A549 (cell line): ENCODE measurements at regions of chr20 and their contacts with region 1.

Region 1: GRCh38 chr20:44609511-44610312 is 27.3 kb downstream of the PKIG start:
- DNase-seq: peak; percentile 91 to 95
- ATAC-seq: peak; percentile 98 to 99
- H3K4me3 ChIP-seq: peak overlapping the region; percentile 29; the same call in 1 of the 3 replicates
- H3K27ac ChIP-seq: peak overlapping the region; percentile 76 to 85
- H3K4me1 ChIP-seq: peaks cover 11% of the 10 kb centered on the region
- CTCF ChIP-seq: peak; percentile 89
- EP300 ChIP-seq: no peak
- POLR2A ChIP-seq: peak; percentile 39; the same call in 1 of the 2 replicates
- RAD21 ChIP-seq: peak; percentile 96 to 98

Region 2: DNA sequence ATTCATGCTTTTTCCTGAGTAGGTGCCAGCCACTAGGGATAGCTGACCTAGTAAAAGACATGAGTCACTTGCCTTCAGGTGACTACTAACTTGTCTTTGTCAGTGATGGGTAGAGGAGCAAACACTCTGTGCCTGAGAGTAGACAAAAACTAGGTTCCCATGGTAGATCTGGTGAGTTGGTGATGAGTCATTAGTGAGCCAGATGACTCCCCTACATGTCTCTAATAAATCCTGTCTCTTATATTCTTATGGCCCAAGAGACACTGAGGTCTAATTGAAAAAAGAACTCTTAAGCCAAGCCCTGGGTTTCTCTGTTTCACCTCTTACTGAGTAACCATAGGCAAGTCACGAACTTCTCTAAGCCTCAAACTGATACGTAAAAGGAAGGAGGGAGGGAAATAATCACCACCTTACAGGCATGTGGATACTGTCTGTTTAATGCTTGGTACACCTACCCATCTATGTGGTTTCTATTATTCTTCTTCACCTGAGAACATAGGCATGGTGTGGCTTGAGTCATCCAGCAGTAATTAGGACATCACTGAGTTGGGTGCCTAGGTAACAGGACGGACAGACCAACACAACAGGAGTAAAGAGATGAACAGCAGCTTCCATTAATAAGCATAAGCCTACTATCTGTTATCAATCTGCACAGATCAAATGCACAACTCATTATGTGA is 113.8 kb before region 1 on chr20:
- CTCF ChIA-PET with region 1: interaction called, 10 read pairs
- POLR2A ChIA-PET with region 1: no interaction called
- DNase-seq: peak; percentile 70 to 89
- ATAC-seq: peak; percentile 81 to 88
- H3K4me3 ChIP-seq: peak overlapping the region; percentile 15; the same call in 1 of the 3 replicates
- H3K27ac ChIP-seq: peak overlapping the region; percentile 86 to 90
- H3K4me1 ChIP-seq: peaks cover 47% of the 10 kb centered on the region
- CTCF ChIP-seq: no peak
- EP300 ChIP-seq: peak; percentile 7 to 36; a peak in 1 of 5 replicates
- POLR2A ChIP-seq: no peak
- RAD21 ChIP-seq: no peak

Region 3: GRCh38 chr20:44532259-44532980 is 77.3 kb before region 1 on chr20:
- CTCF ChIA-PET with region 1: interaction called, 35 read pairs
- POLR2A ChIA-PET with region 1: no interaction called
- DNase-seq: no peak
- ATAC-seq: no peak
- H3K4me3 ChIP-seq: peak overlapping the region; percentile 68
- H3K27ac ChIP-seq: peak overlapping the region; percentile 82 to 91
- H3K4me1 ChIP-seq: peaks cover 19% of the 10 kb centered on the region; the same call in 2 of the 3 replicates
- CTCF ChIP-seq: no peak
- EP300 ChIP-seq: no peak
- POLR2A ChIP-seq: no peak
- RAD21 ChIP-seq: no peak

Region 4: DNA sequence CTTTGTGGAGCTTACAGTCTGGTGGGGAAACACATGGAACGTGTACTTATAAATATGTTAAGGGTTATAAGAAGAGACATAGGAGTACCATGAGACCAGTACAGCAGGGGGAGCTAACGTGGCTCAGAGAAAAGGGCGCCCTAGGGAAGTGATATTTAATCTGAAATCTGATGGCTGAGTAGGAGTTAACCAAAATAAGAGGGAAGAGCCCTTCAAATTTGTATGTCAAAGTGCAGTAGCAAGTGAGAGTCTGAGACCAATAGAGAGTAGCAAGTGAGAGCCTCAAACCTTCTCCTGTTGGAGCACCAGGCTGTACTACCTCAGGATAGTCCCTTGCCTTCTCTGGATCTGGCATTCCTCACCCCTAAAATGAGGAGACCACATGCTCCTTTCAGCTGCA is 33.4 kb before region 1 on chr20:
- CTCF ChIA-PET with region 1: interaction called, 13 read pairs
- POLR2A ChIA-PET with region 1: no interaction called
- DNase-seq: peak in 1 of 2 experiments; percentile 51
- ATAC-seq: peak; percentile 52 to 72; a peak in 3 of 6 replicates
- H3K4me3 ChIP-seq: no peak overlapping the region
- H3K27ac ChIP-seq: peak overlapping the region; percentile 11 to 47; a peak in 3 of 6 replicates
- H3K4me1 ChIP-seq: peaks cover 28% of the 10 kb centered on the region
- CTCF ChIP-seq: peak; percentile 13; the same call in 1 of the 3 replicates
- EP300 ChIP-seq: no peak
- POLR2A ChIP-seq: no peak
- RAD21 ChIP-seq: peak in 1 of 2 experiments; percentile 36; a peak in 2 of 5 replicates

Region 5: DNA sequence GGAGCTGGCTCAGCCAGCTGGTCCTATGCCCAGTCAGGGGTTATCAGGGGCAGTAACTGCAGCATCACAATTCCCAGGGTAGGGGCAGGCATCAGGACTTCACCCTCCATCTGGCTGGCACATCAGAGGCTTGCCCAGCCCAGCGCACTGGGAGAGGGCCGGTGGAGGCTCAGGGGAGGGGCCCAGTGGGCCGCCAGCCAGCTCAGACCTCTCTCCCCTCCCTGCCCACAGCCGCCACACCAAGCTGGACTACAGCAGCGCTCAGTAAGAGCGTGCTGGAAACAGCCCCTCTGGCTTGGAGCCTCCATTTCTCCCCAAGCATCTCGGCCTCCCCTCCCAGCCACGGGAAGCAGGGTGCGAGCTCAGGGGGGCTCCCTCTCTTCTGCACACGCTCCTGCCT is 19.8 kb after region 1 on chr20:
- CTCF ChIA-PET with region 1: interaction called, 25 read pairs
- POLR2A ChIA-PET with region 1: no interaction called
- DNase-seq: no peak
- ATAC-seq: no peak
- H3K4me3 ChIP-seq: no peak overlapping the region
- H3K27ac ChIP-seq: no peak overlapping the region
- H3K4me1 ChIP-seq: no peaks in the 10 kb centered on the region
- CTCF ChIP-seq: no peak
- EP300 ChIP-seq: no peak
- POLR2A ChIP-seq: no peak
- RAD21 ChIP-seq: no peak